ENCODE measurements at regions of chr19 and their contacts with region 1.

Region 1: DNA sequence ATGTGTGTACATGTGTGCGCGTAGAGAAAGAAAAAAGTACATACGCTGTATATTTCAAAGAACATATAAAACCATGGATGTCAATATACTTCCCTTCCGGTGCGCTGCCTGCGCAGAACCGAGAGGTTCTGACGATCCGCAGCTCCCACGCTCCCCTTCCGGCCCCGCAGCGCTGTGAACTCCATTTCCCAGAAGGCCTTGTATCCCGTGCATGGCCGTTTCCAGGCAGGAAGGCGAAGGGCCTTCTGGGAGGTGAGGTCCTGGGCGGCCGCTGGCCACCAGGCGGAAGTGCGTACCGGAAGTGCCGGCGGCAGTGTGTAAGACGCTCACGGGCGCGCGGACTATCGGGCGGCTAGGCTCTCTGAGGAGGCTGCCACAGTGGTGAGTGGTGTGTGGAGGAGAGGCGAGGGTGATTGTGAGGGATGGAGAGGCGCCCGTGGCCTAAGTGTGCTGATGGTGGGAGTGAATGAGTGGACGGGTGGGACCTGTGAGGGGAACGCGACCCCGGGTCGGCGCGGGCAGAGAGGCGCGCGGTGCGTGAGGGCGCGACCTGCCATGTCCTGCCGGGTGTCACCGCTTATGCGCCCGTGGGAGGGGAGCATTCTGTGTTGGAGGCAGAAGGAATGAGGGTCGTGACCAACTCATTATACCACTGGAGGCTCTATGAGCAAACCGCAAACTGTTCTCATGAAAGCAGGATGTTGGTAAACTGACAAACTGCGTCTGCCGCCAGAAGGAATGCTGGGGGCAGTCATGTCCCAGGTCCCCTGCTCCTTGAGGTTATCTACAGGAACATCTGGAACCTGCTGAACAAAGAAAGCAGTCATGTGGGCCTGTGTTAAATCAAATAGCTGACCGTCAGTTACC is at the start of gene ERVK3-1:
- DNase-seq: peak; percentile 98
- total RNA-seq, gene ERVK3-1: 17.1 TPM

Region 2: GRCh38 chr19:58294743-58295374 is 10.4 kb before region 1 on chr19:
- intact Hi-C with region 1: no loop called
- DNase-seq: peak; percentile 59

Region 3: DNA sequence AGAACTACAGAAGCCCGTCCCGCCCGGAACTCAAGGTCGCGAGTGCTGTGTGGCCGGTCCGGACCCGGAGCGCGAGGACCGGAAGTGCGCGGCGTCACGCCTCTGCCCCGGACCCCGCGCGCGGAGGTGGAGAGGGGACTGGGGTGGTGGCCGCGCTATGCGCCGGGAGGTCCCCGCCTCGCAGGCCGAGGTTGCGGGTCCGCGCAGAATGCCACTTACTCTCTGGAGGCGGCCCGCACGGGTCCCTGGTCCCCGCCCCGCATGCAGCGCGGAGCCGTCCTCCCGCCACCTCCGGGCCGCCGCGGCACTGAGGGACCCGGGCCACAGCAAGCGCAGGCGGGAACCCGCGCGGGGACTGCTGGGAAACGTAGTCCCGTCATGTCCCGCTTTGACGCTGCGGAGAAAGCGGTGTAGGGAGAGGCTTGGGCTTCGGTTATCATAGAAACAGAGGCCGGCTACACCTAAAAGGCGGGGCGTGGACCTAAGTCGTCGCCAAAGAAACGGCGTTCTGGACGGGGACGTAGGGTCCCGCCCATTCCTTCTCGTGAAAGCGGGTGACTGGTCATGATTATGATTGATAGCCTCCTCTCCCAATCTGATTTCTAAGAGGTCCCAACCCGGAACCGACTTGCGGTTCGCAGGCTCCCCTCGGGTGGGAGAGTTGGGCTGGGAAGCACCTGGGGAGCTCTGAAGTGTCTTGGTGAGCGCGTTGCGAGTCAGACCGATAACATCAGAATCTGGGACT is 75.6 kb after region 1 on chr19 and contains the start of gene ZNF837:
- intact Hi-C with region 1: loop called (anchors 2 kb)
- DNase-seq: peak; percentile 99
- total RNA-seq, gene ZNF837: 0.54 TPM